ENCODE measurements at regions of chr19 and their contacts with region 1.

Region 1: GRCh38 chr19:15379083-15379995 is at the start of gene AKAP8:
- DNase-seq: peak; percentile 96
- ATAC-seq: peak; percentile 91
- H3K4me3 Mint-ChIP-seq: peak within 1 kb of the TSS; percentile 100
- H3K27ac Mint-ChIP-seq: peak within 1 kb of the TSS; percentile 99
- H3K4me1 Mint-ChIP-seq: peaks cover 43% of the 10 kb centered on the region
- H3K27me3 Mint-ChIP-seq: no peaks in the 10 kb centered on the region
- CTCF ChIP-seq: no peak
- total RNA-seq, gene AKAP8: 74.8 and 79.0 TPM in 2 replicates

Region 2: DNA sequence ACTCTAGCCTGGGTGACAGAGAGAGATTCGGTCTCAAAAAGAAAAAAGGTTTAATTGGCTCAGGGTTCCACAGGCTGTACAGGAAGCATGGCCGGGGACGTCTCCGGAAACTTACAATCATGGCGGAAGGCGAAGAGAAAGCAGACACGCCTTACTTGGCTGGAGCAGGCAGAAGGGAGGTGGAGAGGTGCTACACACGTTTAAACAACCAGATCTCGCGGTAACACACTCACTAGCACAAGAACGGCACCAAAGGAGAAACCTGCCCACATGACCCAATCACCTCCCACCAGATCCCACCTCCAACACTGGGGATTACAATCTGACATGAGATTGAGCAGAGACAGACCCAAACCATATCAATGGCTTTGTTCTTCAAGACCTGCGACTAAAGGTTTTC is 317.3 kb before region 1 on chr19:
- CTCF ChIA-PET with region 1: no interaction called
- POLR2A ChIA-PET with region 1: no interaction called
- intact Hi-C with region 1: no loop called
- DNase-seq: no peak
- ATAC-seq: no peak
- H3K4me3 Mint-ChIP-seq: no peak overlapping the region
- H3K27ac Mint-ChIP-seq: no peak overlapping the region
- H3K4me1 Mint-ChIP-seq: no peaks in the 10 kb centered on the region
- H3K27me3 Mint-ChIP-seq: peaks cover 38% of the 10 kb centered on the region
- CTCF ChIP-seq: no peak

Region 3: DNA sequence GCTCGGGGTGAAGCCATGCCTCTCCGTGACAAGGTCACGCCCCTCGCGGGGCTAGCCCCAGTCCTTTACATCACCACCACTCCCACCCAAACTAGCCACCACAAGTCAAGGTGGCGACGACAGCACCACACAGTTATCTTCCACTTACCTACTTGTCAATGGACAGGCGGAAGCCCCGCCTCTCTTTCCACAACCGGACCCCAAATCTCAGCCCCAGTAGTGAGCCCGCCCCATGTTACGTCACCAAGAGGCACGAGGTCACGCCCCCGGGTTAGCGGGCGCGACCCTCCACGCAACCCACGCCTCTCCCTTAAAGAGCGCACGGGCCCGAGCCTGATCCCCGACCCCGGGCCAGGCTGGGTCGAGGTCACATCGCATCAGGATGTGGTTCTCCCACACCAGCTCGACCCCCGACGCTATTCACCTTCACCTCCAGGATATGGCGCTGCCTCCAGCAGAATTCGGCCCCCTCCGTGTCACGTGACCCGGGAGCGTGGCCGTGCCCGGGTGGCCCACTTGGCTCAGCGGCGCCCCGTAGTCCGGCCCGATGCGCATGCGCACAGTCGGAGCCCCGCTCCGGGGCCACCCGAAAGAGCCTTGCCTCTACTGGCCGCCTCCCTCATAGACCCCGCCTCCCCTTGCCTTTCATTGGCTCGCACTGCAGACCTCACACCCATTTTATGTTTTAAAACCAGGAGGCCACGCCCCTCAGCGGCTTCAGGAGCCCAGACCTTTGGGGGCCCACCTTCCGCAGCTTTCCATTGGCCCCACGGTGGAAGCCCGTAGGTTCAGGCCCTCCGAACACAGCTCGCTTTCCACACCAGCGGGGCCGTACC is 253.9 kb before region 1 on chr19:
- CTCF ChIA-PET with region 1: no interaction called
- POLR2A ChIA-PET with region 1: interaction called, 3 read pairs
- intact Hi-C with region 1: loop called (anchors 1 kb)
- DNase-seq: peak; percentile 96
- ATAC-seq: peak; percentile 88
- H3K4me3 Mint-ChIP-seq: peak overlapping the region; percentile 95
- H3K27ac Mint-ChIP-seq: peak overlapping the region; percentile 91
- H3K4me1 Mint-ChIP-seq: peaks cover 17% of the 10 kb centered on the region
- H3K27me3 Mint-ChIP-seq: peaks cover 4% of the 10 kb centered on the region
- CTCF ChIP-seq: no peak

Region 4: DNA sequence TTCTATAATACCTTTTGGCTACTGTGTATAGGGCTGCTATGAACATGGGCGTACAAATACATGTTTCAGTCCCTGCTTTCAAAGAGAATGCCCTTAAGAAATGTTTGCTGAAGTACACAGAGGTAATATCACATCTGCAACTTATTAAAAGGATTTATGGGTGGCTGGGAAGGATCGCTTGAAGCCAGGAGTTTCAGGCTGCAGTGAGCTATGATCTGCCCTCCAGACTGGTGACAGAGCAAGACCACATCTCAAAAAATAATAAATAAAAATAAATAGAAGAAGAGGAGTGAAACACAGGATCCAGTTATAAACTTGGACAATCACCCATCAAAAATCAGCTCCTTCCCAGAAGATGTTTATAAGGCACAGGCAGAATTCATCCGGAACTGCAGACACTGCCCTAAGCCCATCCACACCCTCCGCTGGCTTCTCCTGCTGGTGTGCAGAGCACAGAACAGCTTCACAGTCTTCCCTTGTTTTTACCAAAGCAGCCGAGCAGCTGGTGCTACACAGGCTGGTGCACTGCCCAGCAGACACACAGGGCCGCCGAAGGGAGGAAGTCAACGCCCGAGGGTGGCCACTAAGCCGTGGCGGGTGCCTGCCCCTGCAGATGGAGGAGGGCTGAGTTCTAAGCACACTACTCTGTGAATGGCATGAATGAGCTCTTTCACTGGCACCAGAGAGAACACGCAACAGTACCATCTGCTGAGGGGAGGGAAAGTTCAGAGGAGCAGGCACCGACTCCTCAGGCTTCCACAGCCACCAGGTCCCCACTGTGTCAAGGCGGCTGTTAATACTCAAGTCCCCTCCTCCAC is 91.0 kb before region 1 on chr19:
- CTCF ChIA-PET with region 1: interaction called, 4 read pairs
- POLR2A ChIA-PET with region 1: interaction called, 17 read pairs
- intact Hi-C with region 1: loop called (anchors 2 kb)
- DNase-seq: peak; percentile 48
- ATAC-seq: peak; percentile 75
- H3K4me3 Mint-ChIP-seq: peak overlapping the region; percentile 72
- H3K27ac Mint-ChIP-seq: peak overlapping the region; percentile 80
- H3K4me1 Mint-ChIP-seq: peaks cover 96% of the 10 kb centered on the region
- H3K27me3 Mint-ChIP-seq: no peaks in the 10 kb centered on the region
- CTCF ChIP-seq: no peak

Region 5: DNA sequence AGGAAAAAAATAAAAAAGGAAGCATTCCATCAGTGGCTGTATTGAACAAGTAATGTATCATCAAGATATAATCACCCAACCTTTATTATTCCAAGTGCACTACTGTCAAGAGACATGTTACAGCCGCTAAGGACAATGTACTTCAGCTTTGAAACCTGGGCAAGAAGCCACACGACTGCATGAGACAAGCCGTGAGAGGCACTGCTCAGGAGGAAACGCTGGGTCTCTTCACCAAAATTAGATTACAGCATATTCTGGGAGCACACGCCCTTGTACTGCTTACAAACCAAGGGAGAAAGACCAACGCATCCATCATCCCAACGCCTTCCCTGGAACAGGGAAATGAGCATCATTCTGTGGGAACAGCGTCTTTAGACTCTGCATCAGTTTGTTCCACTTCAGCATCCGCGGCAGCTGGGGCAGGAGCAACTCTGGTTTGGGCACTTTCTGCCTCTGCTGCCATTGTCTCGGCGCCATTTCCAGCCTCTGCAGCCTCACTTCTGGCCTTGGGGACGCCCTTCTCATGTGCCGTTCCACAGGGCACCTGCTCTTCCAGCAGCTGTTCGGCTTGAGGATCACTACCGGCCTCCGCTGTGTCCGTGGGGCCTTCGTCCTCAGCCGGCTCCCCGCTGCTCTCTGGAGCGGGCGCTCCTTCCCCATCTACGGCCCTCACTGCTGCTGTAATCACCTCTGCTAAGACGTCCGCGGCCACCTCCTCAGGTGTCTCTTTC is 24.6 kb before region 1 on chr19:
- CTCF ChIA-PET with region 1: no interaction called
- POLR2A ChIA-PET with region 1: interaction called, 17 read pairs
- intact Hi-C with region 1: no loop called
- DNase-seq: no peak
- ATAC-seq: no peak
- H3K4me3 Mint-ChIP-seq: no peak overlapping the region
- H3K27ac Mint-ChIP-seq: peak overlapping the region; percentile 32
- H3K4me1 Mint-ChIP-seq: no peaks in the 10 kb centered on the region
- H3K27me3 Mint-ChIP-seq: no peaks in the 10 kb centered on the region
- CTCF ChIP-seq: no peak

Region 6: DNA sequence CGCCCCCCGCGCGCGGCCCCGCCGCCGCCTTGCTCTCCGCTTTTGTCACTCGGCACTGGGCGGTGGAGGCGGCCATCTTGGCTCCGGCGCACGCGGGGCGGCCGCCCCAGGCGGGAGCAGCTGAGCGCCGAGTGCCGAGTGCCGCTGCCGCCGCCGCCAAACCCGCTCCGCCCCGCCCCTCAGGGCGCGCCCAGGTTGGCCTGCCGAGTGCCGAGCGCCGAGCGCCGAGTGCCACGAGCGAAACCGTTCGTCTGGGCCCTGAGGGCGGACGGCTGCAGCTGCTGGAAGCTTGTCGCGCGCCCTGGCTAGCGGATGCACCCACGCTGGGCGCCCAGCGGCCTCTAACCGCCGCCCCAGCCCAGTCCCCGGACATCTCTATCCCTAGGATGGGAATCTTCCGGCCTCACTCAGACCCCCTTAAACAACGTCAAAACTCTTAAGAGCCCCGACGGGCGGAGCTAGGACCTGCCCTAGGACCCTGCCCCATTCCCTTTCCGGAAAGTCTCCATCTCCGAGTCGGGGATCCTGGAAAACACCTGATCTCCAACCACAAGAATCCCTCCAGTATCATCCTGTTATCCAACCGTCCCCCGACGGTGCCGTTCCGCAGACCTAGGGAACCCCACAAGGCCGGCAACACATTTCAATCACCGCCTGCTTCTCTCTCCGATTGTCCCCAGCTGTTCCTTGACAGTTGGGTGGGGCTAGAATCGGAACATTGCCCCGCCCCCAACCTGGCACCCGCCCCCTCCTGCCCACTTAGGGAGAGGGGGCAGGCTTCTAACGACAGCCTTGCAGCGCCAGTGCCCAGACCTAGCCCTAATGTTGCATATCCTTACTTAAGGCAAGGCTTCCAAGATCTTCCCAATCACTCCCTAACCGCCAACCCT is 53.5 kb after region 1 on chr19:
- CTCF ChIA-PET with region 1: no interaction called
- POLR2A ChIA-PET with region 1: interaction called, 16 read pairs
- intact Hi-C with region 1: loop called (anchors 1 kb)
- DNase-seq: peak; percentile 92
- ATAC-seq: peak; percentile 89
- H3K4me3 Mint-ChIP-seq: peak overlapping the region; percentile 97
- H3K27ac Mint-ChIP-seq: peak overlapping the region; percentile 93
- H3K4me1 Mint-ChIP-seq: peaks cover 31% of the 10 kb centered on the region
- H3K27me3 Mint-ChIP-seq: no peaks in the 10 kb centered on the region
- CTCF ChIP-seq: no peak

Measured in activated B cell treated with CpG ODN at 0.5 μM for 24 hours (primary cell).